Gastrocnemius medialis (tissue), 4 donors: ENCODE measurements at regions of chr12 and their contacts with region 1.

Region 1: DNA sequence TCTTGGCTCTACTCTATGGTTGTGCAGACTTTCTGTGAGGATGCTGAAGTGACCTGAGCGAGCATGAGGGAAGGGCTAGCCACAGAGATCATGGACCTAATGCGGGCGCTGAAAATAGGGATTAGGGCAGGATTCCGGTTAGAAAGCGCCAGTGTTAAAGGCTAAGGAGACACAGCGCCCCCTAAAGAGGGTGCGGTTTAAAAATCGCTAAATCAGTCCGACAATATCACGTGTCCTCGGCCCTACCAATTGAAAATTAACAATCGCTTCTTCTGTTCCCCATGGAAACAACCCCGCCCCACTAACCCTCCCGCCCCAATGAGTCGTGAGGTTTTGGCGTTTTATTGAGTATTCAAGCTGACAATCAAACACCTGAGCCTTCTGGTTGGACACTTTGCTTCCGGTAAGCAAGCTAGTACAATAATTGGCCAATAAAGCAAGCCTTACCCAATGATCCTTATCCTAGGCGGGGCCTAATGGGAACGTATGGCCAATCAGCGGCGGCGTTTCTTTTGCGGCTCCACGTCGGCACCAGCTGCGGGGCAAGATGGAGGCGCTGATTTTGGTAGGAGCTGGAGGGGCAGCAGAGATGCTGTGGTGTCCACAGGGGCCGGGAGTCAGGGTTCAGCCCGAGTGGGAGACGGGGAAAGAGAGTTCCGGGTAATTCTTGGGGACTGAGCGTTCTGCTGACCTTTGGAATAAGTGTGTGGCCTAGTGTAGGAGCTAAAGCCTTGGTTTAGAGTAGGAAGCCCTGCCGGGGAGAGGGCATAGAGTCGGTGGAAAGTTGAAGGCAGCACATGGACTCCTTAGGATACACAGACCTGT is at the start of gene COPZ1:
- DNase-seq: peak; percentile 96 to 99
- ATAC-seq: peak; percentile 99 to 100
- H3K4me3 ChIP-seq: peak within 1 kb of the TSS; percentile 79 to 86 (median 84)
- H3K27ac ChIP-seq: peak within 1 kb of the TSS; percentile 82 to 91 (median 88)
- H3K4me1 ChIP-seq: peaks cover 16 to 29% of the 10 kb centered on the region in 2 donors
- H3K27me3 ChIP-seq: no peaks in the 10 kb centered on the region
- CTCF ChIP-seq: peak; percentile 56 to 77 (median 67)
- POLR2A ChIP-seq: peak; percentile 71 to 73
- total RNA-seq, gene COPZ1: 91.8 to 145 (median 107) TPM

Region 2: GRCh38 chr12:53899232-53899631 is 425.6 kb before region 1 on chr12:
- in situ Hi-C with region 1: no loop called
- intact Hi-C with region 1: no loop called
- DNase-seq: no peak
- ATAC-seq: no peak
- H3K4me3 ChIP-seq: no peak overlapping the region
- H3K27ac ChIP-seq: no peak overlapping the region
- H3K4me1 ChIP-seq: no peaks in the 10 kb centered on the region
- H3K27me3 ChIP-seq: peaks cover 9 to 38% (median 24%) of the 10 kb centered on the region in 3 donors
- CTCF ChIP-seq: no peak
- POLR2A ChIP-seq: no peak

Region 3: DNA sequence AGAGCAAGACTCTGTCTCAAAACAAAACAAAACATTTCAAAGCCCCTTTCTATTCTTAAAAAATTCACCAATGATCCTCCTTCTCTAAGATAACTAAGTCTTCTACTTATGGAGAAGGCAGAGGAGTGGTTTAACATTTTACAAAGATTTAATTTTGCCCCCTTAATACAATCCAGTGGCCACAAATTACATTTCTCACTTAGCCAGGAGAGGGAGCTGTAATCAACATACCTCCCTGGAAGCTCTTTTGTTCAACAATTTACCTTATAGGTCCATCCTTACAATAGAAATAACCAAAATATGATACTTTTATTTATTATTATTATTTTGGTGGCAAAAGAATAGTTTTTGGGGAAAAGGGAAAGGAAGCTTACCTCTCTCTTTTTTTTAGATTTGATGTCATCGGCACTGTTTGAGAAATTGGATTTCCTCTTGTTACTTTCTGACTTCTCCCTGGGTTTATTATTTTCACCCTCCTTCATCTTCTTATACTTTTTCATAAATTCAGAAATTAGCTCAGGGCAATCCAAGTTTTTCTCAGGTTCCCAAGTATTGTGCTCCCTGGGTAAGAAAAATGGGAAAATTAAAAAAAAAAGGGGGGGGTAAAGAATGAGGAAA is 73.1 kb before region 1 on chr12:
- in situ Hi-C with region 1: no loop called
- intact Hi-C with region 1: loop called (anchors 2 kb)
- DNase-seq: no peak
- ATAC-seq: peak; percentile 55 to 75
- H3K4me3 ChIP-seq: no peak overlapping the region
- H3K27ac ChIP-seq: no peak overlapping the region
- H3K4me1 ChIP-seq: peaks cover 11 to 13% of the 10 kb centered on the region in 2 donors
- H3K27me3 ChIP-seq: no peaks in the 10 kb centered on the region
- CTCF ChIP-seq: peak; percentile 55 to 64 (median 59)
- POLR2A ChIP-seq: no peak

Region 4: GRCh38 chr12:54294152-54294952 is 30.5 kb before region 1 on chr12:
- in situ Hi-C with region 1: no loop called
- intact Hi-C with region 1: loop called (anchors 1 kb)
- DNase-seq: peak in 1 of 2 donors; percentile 38
- ATAC-seq: peak; percentile 33 to 60
- H3K4me3 ChIP-seq: no peak overlapping the region
- H3K27ac ChIP-seq: no peak overlapping the region
- H3K4me1 ChIP-seq: peaks cover 0 to under 1% of the 10 kb centered on the region in 2 donors
- H3K27me3 ChIP-seq: no peaks in the 10 kb centered on the region
- CTCF ChIP-seq: peak; percentile 64 to 76 (median 69)
- POLR2A ChIP-seq: no peak

Region 5: DNA sequence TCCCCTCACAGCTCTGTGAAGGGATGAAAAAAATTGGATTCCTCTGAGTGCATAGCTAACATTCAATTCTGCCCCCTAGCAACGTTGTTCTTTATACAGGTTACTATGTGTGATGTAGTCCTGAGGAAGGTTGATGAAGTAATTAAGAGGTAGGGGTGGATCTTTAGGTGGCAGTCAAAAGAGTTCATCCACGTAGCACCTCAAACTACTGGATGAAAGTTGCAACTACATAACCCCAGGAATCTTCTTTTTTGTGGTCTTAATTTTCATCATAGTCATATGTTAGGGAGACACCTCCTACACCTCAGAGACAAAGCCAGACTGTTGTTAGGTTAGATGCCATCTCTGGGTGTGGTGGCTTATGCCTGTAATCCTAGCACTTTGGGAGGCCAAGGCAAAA is 13.8 kb before region 1 on chr12:
- in situ Hi-C with region 1: no loop called
- intact Hi-C with region 1: no loop called
- DNase-seq: no peak
- ATAC-seq: no peak
- H3K4me3 ChIP-seq: no peak overlapping the region
- H3K27ac ChIP-seq: no peak overlapping the region
- H3K4me1 ChIP-seq: no peaks in the 10 kb centered on the region
- H3K27me3 ChIP-seq: no peaks in the 10 kb centered on the region
- CTCF ChIP-seq: no peak
- POLR2A ChIP-seq: no peak